ENCODE measurements at regions of chr7 and their contacts with region 1.

Region 1: GRCh38 chr7:89676909-89677308 is 477.4 kb upstream of the STEAP1 start:
- DNase-seq: no peak
- ATAC-seq: no peak
- H3K4me3 ChIP-seq: no peak overlapping the region
- H3K27ac ChIP-seq: no peak overlapping the region
- H3K4me1 ChIP-seq: no peaks in the 10 kb centered on the region
- H3K27me3 ChIP-seq: no peaks in the 10 kb centered on the region
- CTCF ChIP-seq: no peak

Region 2: GRCh38 chr7:89655946-89656345 is 21.0 kb before region 1 on chr7:
- intact Hi-C with region 1: loop called in 1 of 2 experiments (anchors 2 kb)
- DNase-seq: no peak
- ATAC-seq: no peak
- H3K4me3 ChIP-seq: no peak overlapping the region
- H3K27ac ChIP-seq: no peak overlapping the region
- H3K4me1 ChIP-seq: no peaks in the 10 kb centered on the region
- H3K27me3 ChIP-seq: no peaks in the 10 kb centered on the region
- CTCF ChIP-seq: no peak